ENCODE measurements at regions of chr12 and their contacts with region 1.

Region 1: DNA sequence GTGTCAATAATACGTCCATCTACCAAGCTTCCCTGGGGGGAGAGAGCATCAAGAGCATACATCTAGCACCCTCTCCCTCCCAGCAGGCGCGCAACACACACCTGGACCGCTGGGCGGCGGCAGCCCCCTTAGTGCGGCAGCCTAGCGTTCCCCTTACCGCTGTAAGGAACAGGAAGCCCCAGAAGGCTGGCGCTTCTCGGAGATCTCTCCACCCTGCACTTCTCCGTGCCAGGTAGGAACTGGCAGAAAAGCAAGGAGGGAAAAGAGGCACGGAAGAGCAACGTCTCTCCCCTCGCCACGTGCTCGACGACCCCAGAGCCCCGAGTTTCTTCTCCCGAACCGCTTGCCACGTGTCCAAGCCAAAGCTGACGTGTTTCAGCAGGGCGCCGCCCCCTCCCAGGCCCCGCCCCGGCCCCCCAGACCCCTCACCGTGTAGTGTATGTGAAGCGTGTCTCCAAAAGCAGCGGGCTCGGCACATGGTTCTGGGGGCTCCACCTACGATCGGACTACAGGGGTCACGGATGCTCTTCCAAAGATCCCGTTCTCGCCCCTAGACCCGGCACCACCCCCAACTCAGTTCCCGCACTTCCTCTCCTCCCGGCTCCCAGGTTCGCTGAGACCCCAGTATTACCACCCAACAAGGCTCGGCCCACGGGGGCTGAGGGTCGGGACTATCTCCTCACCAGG is 532 bp downstream of the FKBP11 start:
- DNase-seq: peak; percentile 89
- H3K4me3 ChIP-seq: peak overlapping the region; percentile 82
- H3K27ac ChIP-seq: peak overlapping the region; percentile 46
- H3K4me1 ChIP-seq: peaks cover 14% of the 10 kb centered on the region
- CTCF ChIP-seq: peak; percentile 91

Region 2: GRCh38 chr12:48936379-48936979 is 11.7 kb after region 1 on chr12:
- CTCF ChIA-PET with region 1: interaction called, 5 read pairs
- POLR2A ChIA-PET with region 1: interaction called, 7 read pairs
- intact Hi-C with region 1: loop called (anchors 1 kb)
- DNase-seq: peak; percentile 74
- H3K4me3 ChIP-seq: no peak overlapping the region
- H3K27ac ChIP-seq: no peak overlapping the region
- H3K4me1 ChIP-seq: no peaks in the 10 kb centered on the region
- CTCF ChIP-seq: peak; percentile 98

Region 3: DNA sequence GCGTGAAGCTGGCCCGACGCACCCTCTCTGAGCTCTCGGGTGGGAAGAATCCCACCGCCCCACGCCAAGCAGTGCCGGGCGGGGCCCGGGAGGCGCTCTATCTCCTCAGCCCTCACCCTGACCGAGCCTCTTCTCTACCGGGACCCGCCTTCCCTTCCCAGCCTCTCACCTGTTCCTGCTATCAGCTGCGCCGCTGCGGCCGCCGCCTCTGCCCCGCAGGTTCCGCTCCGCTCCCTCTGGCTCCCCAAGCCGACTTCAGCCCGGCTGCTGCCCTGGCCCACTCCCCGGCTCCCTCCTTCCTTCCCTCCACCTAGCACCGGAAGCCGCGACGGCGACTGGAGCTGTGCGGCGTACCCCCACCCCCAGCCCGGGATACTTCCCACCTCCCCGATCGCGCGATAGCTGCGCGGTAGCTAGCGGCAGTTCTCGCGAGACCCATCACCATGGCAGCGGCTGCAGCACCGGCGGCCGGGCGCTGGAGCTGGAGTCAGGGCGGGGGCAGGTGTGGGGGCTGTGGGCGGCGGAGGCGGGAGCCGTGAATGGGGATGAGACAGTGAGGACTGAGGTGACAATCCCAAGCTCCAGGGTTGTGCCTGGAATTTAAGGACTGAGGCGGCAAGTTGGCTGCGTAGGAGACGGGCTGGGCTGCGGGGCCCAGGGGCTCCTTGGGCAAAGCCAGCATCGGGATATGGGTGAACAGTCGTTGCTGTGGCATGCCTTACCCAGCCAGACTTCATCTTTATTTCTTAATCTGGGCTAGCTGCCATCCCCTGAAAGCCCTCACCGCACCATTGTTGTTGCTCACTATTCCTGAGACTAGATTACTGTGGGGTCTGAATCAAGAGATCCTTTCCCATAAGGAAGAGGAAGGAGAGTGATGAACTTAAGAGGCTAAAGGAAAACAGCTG is 32.6 kb after region 1 on chr12 and contains the start of gene ARF3:
- CTCF ChIA-PET with region 1: interaction called, 4 read pairs
- POLR2A ChIA-PET with region 1: interaction called, 14 read pairs
- intact Hi-C with region 1: loop called (anchors 2 kb)
- DNase-seq: peak; percentile 97
- H3K4me3 ChIP-seq: peak within 1 kb of the TSS; percentile 75
- H3K27ac ChIP-seq: peak within 1 kb of the TSS; percentile 61
- H3K4me1 ChIP-seq: peaks cover 31% of the 10 kb centered on the region
- CTCF ChIP-seq: peak; percentile 21; the same call in 1 of the 2 replicates
- total RNA-seq, gene ARF3: 41.2 and 42.9 TPM in 2 replicates

Region 4: DNA sequence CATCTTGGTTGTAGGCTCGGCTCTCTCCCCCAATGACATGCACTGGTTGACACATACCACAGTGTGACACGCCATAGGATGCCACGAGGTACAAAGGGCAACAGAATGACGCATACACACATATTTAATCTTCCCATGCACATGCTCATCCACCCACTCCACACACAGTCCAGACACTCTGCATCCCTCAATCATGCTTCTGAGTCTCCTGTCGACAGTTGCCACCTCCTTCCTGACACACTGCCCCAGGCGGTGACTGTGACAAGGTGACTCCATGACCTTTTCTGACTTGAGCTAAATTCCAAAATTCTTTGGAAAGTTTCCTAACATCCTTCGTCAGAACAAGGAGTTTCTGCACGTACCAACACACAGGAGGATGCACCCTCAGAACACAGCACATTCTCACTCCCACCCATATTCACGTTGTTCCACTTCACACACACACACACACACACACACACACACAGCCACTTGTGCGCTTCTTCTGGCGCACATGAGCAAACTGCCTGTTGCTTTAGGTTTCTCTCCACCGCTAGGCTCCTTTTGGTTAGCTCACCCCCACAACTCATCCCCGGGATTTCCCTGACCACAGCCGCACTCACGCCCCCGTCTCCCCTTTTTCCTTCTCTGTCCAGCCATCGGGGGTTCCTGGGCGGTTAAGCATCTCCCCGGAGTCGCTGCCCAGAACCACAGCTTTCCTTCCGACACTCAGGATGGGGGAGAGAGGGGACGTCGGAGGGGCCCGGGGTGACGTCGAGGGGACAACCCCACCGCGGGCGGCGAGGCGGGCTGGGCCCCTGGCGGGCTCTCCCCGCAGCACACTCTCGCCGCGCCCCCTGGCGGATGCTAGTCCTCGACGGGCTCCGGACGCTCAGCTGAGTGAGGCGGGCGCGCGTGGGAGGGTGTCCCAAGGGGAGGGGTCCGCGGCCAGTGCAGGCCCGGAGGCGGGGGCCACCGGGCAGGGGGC is 52.8 kb after region 1 on chr12:
- CTCF ChIA-PET with region 1: interaction called, 3 read pairs
- POLR2A ChIA-PET with region 1: no interaction called
- intact Hi-C with region 1: loop called (anchors 1 kb)
- DNase-seq: peak; percentile 78
- H3K4me3 ChIP-seq: no peak overlapping the region
- H3K27ac ChIP-seq: no peak overlapping the region
- H3K4me1 ChIP-seq: peaks cover 6% of the 10 kb centered on the region
- CTCF ChIP-seq: peak; percentile 81

Region 5: DNA sequence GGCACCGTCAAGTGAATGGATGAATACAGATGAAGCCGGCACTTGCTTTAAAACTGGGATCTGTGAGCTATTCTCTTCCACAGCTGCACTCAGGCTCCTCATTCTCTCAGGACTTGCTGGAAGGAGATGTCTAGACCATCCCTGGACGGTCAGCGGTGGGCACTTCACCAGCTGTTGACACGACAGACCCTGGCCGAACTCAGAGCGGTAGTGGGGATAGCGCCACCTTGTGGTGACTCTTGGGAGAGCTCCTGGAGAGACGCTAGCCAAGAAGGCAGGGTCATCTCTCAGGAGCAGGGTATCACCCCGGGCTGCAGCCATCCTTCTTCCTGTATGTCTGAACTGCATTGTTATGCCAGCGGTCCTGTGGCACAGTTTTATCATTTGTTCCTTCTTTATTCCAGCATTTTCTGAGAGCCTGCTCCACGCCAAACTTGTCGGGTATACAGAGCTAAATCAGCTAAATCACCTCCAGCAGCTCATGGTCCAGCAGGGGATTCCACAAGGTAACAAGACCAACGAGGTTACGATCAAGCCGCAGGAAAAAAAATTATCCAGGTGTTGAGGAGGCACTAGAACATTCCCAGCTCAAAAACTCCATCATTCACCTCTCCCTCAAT is 63.4 kb after region 1 on chr12:
- CTCF ChIA-PET with region 1: interaction called, 3 read pairs
- POLR2A ChIA-PET with region 1: interaction called, 3 read pairs
- intact Hi-C with region 1: loop called (anchors 2 kb)
- DNase-seq: peak; percentile 69
- H3K4me3 ChIP-seq: no peak overlapping the region
- H3K27ac ChIP-seq: no peak overlapping the region
- H3K4me1 ChIP-seq: peaks cover 9% of the 10 kb centered on the region
- CTCF ChIP-seq: peak; percentile 98

Region 6: GRCh38 chr12:49415521-49415970 is 490.8 kb after region 1 on chr12:
- CTCF ChIA-PET with region 1: no interaction called
- POLR2A ChIA-PET with region 1: no interaction called
- intact Hi-C with region 1: no loop called
- DNase-seq: no peak
- H3K4me3 ChIP-seq: no peak overlapping the region
- H3K27ac ChIP-seq: no peak overlapping the region
- H3K4me1 ChIP-seq: no peaks in the 10 kb centered on the region
- CTCF ChIP-seq: no peak

Region 7: GRCh38 chr12:49482095-49483051 is 557.6 kb after region 1 on chr12:
- CTCF ChIA-PET with region 1: no interaction called
- POLR2A ChIA-PET with region 1: no interaction called
- intact Hi-C with region 1: no loop called
- DNase-seq: no peak
- H3K4me3 ChIP-seq: no peak overlapping the region
- H3K27ac ChIP-seq: no peak overlapping the region
- H3K4me1 ChIP-seq: no peaks in the 10 kb centered on the region
- CTCF ChIP-seq: no peak

Measured in OCI-LY7 (cell line).